H1 (cell line): ENCODE measurements at regions of chr2 and their contacts with region 1.

Region 1: DNA sequence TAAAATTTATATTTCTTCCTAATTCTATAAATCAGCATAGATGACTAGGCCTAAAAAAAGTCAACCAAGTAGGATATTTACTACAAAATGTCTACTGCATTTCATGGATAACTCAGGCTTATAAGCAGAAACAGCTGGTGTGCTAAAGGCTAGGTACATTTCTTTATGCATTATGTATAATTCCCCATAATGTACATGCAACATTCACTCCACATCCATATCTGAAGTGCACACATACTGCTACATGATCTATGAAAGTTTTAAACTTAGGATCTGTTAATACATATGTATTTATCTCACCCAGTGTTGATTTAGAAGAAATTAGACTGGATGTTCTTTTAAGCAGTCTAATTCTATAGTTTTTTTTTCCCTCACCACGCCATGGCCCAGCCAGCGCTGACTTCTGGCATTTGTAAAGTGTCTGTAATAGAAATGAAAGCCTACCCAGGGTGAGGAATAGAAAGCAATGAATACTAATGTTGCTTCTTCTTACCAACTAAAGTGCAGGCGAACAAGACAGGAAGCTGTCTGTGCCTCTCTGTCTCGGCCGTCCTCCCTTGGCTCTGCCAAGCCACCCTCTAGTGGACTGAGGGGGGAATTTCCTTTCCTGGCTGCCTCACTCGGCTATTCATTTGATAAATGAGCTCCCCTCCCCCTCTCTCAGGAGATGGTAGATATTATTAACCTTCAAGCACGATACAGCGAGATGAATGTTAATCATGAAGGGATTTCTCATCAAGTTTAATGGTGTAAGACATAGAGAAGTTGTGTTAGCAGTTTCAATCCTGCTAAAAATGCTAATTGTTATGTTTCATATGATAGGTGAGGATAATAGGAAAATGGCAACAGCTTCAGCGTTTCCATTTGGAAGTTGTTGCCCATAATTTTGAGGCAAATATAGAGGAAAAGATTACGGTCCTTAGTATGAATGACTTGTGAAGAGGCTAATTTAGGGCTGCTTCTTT is 384.5 kb downstream of the MTX2 start:
- DNase-seq: peak in 1 of 2 experiments; percentile 49
- H3K4me3 ChIP-seq: no peak overlapping the region
- H3K27ac ChIP-seq: no peak overlapping the region
- H3K4me1 ChIP-seq: no peaks in the 10 kb centered on the region; a peak in 1 of 7 replicates
- H3K27me3 ChIP-seq: no peaks in the 10 kb centered on the region; a peak in 1 of 7 replicates
- CTCF ChIP-seq: peak; percentile 81 to 89 (median 81)
- EP300 ChIP-seq: no peak
- POLR2A ChIP-seq: no peak
- RAD21 ChIP-seq: peak; percentile 55 to 71

Region 2: DNA sequence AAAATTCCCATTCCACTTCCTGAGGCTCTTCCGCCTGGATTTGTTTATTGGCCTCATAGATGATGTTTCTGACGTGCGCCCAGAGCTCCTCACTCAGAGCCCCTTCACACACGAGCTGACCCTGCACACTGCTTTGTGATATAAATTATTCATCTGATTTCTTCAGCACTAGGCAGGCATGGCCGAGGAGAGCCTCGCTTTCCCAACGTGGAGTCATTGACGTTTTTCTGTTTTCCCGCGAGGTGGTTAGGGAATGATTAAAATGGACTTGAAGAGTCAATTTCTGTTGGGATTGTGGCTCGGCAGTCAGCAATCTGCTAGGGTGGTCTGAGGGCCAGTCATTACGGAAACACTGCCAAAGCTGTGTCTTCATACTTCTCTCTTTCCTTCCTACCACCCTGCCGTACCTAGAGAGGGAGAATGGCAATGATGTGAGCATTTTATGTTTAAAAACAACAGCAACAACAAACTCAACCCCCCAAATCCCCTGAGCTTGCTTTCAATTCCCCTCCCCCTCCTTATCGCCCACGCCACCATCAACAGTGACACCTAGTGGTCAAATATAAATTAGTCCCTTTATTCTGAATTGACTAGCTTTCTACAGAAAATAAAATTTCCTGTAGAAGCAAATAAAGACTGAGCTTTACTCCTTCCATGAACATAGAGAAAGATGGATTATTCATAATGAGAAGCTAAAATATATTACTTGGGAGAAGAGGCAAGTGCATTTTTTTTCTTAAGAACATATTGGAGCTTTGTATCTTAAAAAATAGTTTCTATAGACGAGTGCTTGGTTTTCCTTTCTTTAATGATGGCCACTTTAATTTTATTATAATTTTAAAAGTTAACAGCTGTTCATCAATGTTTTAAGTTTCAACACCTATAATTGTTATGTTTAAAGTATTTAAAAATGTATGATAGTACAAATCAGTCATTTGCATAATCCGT is 99.4 kb before region 1 on chr2:
- CTCF ChIA-PET with region 1: interaction called, 17 read pairs
- POLR2A ChIA-PET with region 1: no interaction called
- DNase-seq: peak in 1 of 2 experiments; percentile 55
- H3K4me3 ChIP-seq: peak overlapping the region in 3 of 4 experiments; percentile 20 to 51 (median 43); a peak in 5 of 8 replicates
- H3K27ac ChIP-seq: no peak overlapping the region
- H3K4me1 ChIP-seq: no peaks in the 10 kb centered on the region; a peak in 2 of 7 replicates
- H3K27me3 ChIP-seq: peaks cover 0 to 11% (median 8%) of the 10 kb centered on the region in 4 experiments; a peak in 6 of 7 replicates
- CTCF ChIP-seq: peak; percentile 13 to 64 (median 62)
- EP300 ChIP-seq: no peak
- POLR2A ChIP-seq: no peak
- RAD21 ChIP-seq: peak; percentile 75 to 84

Region 3: GRCh38 chr2:176628438-176628837 is 25.3 kb before region 1 on chr2:
- CTCF ChIA-PET with region 1: interaction called, 16 read pairs
- POLR2A ChIA-PET with region 1: no interaction called
- DNase-seq: no peak
- H3K4me3 ChIP-seq: no peak overlapping the region
- H3K27ac ChIP-seq: no peak overlapping the region
- H3K4me1 ChIP-seq: no peaks in the 10 kb centered on the region
- H3K27me3 ChIP-seq: no peaks in the 10 kb centered on the region; a peak in 1 of 7 replicates
- CTCF ChIP-seq: no peak
- EP300 ChIP-seq: no peak
- POLR2A ChIP-seq: no peak
- RAD21 ChIP-seq: no peak

Region 4: DNA sequence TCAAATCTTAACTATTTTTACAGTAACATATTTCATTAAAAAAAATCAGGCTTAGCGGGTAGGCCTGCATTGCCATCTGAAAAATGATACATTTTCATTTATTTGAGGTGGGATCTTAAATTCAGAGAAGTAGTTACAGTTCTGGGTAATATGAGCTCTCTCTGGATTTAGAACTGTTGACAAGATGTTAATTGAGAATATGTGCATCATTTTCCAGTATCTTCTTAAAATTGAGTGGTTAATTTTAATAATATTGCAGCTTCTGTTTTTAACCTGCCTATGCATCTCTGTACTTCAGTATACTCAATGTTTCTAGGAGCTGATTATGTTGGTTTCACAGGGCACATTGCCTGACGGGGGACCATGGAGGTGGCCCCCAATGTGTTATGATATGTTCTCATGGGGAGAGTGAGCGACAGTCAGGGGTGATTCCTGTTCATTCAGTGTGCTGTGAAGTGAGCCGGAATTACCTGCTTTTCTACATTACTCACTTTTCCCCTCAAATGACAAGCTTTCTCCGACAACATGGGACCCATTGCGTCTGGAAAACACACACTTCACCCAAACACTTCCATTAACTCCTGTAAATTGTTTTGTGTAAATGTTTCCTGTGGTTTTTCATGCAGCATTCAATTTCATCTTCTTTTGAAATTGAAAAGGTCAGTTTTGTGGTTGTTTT is 21.6 kb after region 1 on chr2:
- CTCF ChIA-PET with region 1: interaction called, 19 read pairs
- POLR2A ChIA-PET with region 1: no interaction called
- DNase-seq: no peak
- H3K4me3 ChIP-seq: no peak overlapping the region
- H3K27ac ChIP-seq: no peak overlapping the region
- H3K4me1 ChIP-seq: peaks cover 2 to 9% (median 7%) of the 10 kb centered on the region in 4 experiments; a peak in 4 of 7 replicates
- H3K27me3 ChIP-seq: no peaks in the 10 kb centered on the region
- CTCF ChIP-seq: no peak
- EP300 ChIP-seq: no peak
- POLR2A ChIP-seq: no peak
- RAD21 ChIP-seq: no peak

Region 5: GRCh38 chr2:176814306-176815052 is 160.7 kb after region 1 on chr2:
- CTCF ChIA-PET with region 1: interaction called, 39 read pairs
- POLR2A ChIA-PET with region 1: no interaction called
- DNase-seq: no peak
- H3K4me3 ChIP-seq: no peak overlapping the region
- H3K27ac ChIP-seq: no peak overlapping the region
- H3K4me1 ChIP-seq: peaks cover 5 to 20% (median 15%) of the 10 kb centered on the region in 4 experiments; a peak in 5 of 7 replicates
- H3K27me3 ChIP-seq: no peaks in the 10 kb centered on the region; a peak in 1 of 7 replicates
- CTCF ChIP-seq: peak in 2 of 3 experiments; percentile 29 to 47; a peak in 2 of 4 replicates
- EP300 ChIP-seq: no peak
- POLR2A ChIP-seq: no peak
- RAD21 ChIP-seq: peak; percentile 76 to 79

Region 6: DNA sequence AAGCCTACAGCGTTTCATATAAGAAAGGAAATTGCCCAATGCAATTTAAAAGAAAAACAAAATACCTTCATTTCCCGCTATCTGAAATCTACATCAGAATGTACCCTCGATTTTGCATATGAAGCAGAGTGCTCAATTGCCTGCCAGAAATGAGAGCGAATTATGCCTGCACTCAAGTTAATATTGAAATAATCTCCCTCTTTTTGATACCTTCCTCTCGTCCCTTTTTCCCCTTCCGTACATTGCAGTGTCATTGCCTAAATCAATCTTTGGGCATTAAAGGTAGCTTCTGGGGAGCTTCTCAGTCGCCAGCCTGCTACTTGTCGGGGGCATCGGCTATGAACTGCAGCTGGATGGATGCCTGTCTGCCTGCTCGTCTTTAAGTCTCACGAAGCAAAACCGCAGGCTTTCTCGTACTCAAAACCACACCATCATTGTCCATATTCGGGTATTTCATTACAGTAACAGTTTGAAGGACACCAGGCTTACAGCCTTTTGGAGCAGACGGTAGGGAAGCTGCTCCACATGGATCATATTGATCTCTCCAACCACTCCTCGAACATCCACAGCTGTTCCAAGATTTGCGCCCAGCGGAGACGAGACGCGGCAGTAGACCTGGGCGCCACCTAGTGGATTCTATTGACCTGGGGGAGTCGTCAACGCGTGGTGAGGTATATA is 494.9 kb after region 1 on chr2:
- CTCF ChIA-PET with region 1: interaction called, 24 read pairs
- POLR2A ChIA-PET with region 1: no interaction called
- DNase-seq: peak; percentile 59 to 93
- H3K4me3 ChIP-seq: peak overlapping the region; percentile 14 to 60 (median 59); a peak in 7 of 8 replicates
- H3K27ac ChIP-seq: no peak overlapping the region
- H3K4me1 ChIP-seq: no peaks in the 10 kb centered on the region; a peak in 2 of 7 replicates
- H3K27me3 ChIP-seq: peaks cover 0 to 7% (median 1%) of the 10 kb centered on the region in 4 experiments; a peak in 3 of 7 replicates
- CTCF ChIP-seq: peak; percentile 89 to 90 (median 90)
- EP300 ChIP-seq: no peak
- POLR2A ChIP-seq: no peak
- RAD21 ChIP-seq: peak; percentile 73 to 82